Activated CD4-positive, alpha-beta memory T cell treated with anti-CD3 and anti-CD28 coated beads for 36 hours (primary cell): ENCODE measurements at regions of chr17 and their contacts with region 1.

Region 1: GRCh38 chr17:17416007-17416399 is 60.8 kb upstream of the MED9 start:
- DNase-seq: peak; percentile 51
- H3K4me3 Mint-ChIP-seq: no peak overlapping the region
- H3K27ac Mint-ChIP-seq: peak overlapping the region; percentile 79
- H3K4me1 Mint-ChIP-seq: peaks cover 23% of the 10 kb centered on the region
- H3K27me3 Mint-ChIP-seq: peaks cover 8% of the 10 kb centered on the region

Region 2: DNA sequence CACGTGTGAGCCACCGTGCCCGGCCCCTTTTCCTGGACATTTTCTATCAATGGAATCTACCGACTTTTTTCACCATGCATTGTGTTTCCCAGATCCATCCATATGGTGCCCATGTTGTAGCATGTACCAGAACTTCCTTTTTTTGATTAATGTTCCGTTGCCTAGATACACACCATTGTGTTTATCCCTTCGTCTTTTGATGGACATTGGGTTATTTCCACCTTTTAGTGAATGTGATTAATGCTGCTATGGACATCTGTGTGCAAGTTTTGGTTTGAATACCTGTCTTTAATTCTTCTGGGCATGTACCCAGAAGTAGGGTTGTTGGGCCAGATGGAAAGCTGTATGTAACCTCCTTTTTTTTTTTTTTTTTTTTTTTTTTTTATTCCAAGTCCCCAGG is 33.0 kb before region 1 on chr17:
- CTCF ChIA-PET with region 1: no interaction called
- POLR2A ChIA-PET with region 1: no interaction called
- intact Hi-C with region 1: loop called (anchors 1 kb)
- DNase-seq: no peak
- H3K4me3 Mint-ChIP-seq: no peak overlapping the region
- H3K27ac Mint-ChIP-seq: no peak overlapping the region
- H3K4me1 Mint-ChIP-seq: no peaks in the 10 kb centered on the region
- H3K27me3 Mint-ChIP-seq: peaks cover 5% of the 10 kb centered on the region

Region 3: GRCh38 chr17:17435323-17435722 is 19.3 kb after region 1 on chr17:
- CTCF ChIA-PET with region 1: no interaction called
- POLR2A ChIA-PET with region 1: no interaction called
- intact Hi-C with region 1: no loop called
- DNase-seq: no peak
- H3K4me3 Mint-ChIP-seq: no peak overlapping the region
- H3K27ac Mint-ChIP-seq: no peak overlapping the region
- H3K4me1 Mint-ChIP-seq: peaks cover 4% of the 10 kb centered on the region
- H3K27me3 Mint-ChIP-seq: no peaks in the 10 kb centered on the region